ENCODE measurements at regions of chr10 and their contacts with region 1.

Region 1: DNA sequence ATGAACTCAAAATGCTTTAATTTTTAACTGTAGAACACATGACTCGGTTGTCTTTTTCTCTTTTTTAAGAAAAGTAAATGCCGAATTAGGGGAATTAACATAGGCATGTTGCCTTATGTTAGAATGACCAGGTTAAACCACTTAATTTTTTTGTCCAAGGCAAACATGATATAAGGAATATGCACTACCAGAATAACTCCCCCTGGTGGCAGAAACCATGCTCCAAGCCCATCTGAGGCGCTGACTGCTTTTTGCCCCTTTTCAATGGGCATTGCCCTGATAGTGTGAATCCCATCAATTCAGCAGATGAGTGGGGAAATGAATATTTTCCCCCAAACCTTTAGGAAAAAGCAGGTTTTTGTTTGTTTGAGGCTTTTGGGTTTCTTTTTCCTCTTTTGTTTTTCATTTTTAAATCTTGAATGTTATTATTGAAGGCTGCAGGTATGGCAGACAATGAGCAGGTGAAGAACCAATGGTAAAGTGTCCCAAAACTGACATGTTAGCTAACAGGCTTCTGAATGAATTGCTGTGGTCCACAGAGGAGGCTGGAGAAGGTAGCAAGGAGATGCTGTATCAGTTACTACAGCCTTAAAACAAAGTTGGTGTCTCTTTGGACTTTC is 284.3 kb downstream of the SORCS3 start:
- DNase-seq: peak; percentile 25
- ATAC-seq: peak; percentile 79
- H3K4me3 ChIP-seq: no peak overlapping the region
- H3K27ac ChIP-seq: no peak overlapping the region
- H3K4me1 ChIP-seq: no peaks in the 10 kb centered on the region
- H3K27me3 ChIP-seq: no peaks in the 10 kb centered on the region
- CTCF ChIP-seq: peak; percentile 52
- EP300 ChIP-seq: no peak
- POLR2A ChIP-seq: no peak
- RAD21 ChIP-seq: no peak

Region 2: DNA sequence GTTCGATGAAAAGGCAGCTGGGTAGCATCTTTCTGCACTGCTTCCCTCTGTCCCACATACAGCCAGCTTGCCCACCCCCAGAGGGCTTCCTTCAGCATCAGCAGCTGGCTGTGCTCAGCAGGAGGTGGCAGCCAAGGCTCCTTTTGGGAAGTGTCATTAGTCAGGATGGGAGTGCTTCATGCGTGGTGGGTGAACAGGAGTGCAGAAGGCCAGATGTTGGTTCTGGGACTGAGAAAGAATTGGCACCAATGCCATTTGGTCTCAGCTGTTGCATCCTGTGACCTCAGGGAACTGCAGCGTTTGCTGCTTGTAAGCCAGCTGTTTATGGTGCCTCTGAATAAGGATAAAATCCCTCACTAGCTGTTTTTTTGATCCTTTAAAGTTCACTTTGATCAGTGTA is 415.4 kb before region 1 on chr10:
- CTCF ChIA-PET with region 1: no interaction called
- POLR2A ChIA-PET with region 1: no interaction called
- in situ Hi-C with region 1: no loop called
- intact Hi-C with region 1: no loop called
- DNase-seq: no peak
- ATAC-seq: no peak
- H3K4me3 ChIP-seq: no peak overlapping the region
- H3K27ac ChIP-seq: no peak overlapping the region
- H3K4me1 ChIP-seq: no peaks in the 10 kb centered on the region
- H3K27me3 ChIP-seq: peaks cover 0 to 13% of the 10 kb centered on the region in 2 experiments; a peak in 1 of 5 replicates
- CTCF ChIP-seq: no peak
- EP300 ChIP-seq: no peak
- POLR2A ChIP-seq: no peak
- RAD21 ChIP-seq: no peak

Region 3: GRCh38 chr10:104642658-104643302 is 282.6 kb before region 1 on chr10:
- CTCF ChIA-PET with region 1: interaction called, 6 read pairs
- POLR2A ChIA-PET with region 1: no interaction called
- in situ Hi-C with region 1: loop called (anchors 10 kb)
- intact Hi-C with region 1: loop called (anchors 2 kb)
- DNase-seq: peak; percentile 28
- ATAC-seq: peak; percentile 79
- H3K4me3 ChIP-seq: no peak overlapping the region
- H3K27ac ChIP-seq: no peak overlapping the region
- H3K4me1 ChIP-seq: no peaks in the 10 kb centered on the region
- H3K27me3 ChIP-seq: peaks cover 4 to 42% of the 10 kb centered on the region in 2 experiments; a peak in 3 of 5 replicates
- CTCF ChIP-seq: peak; percentile 54
- EP300 ChIP-seq: no peak
- POLR2A ChIP-seq: no peak
- RAD21 ChIP-seq: no peak

Region 4: DNA sequence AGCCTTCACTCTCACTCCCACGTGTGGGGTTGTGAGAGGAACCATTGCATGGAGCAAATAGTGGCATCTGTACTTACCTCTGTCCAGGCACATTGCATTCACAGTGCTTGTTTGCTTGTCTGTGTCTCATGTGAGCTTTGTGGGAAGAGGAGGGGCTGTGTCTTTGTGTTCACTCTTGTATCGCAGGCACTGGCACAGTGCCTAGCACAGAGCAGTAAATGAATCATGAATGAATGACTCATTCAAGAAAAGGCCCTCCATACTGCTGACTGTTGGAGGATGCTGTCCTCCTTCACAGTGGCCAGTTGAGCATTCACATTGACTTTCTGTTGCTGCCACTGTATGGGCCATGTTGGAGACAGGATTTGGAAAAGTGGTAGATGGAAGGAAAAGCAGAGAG is 159.0 kb before region 1 on chr10:
- CTCF ChIA-PET with region 1: no interaction called
- POLR2A ChIA-PET with region 1: no interaction called
- in situ Hi-C with region 1: no loop called
- intact Hi-C with region 1: loop called (anchors 5 kb)
- DNase-seq: no peak
- ATAC-seq: no peak
- H3K4me3 ChIP-seq: no peak overlapping the region
- H3K27ac ChIP-seq: no peak overlapping the region
- H3K4me1 ChIP-seq: no peaks in the 10 kb centered on the region
- H3K27me3 ChIP-seq: no peaks in the 10 kb centered on the region
- CTCF ChIP-seq: no peak
- EP300 ChIP-seq: no peak
- POLR2A ChIP-seq: no peak
- RAD21 ChIP-seq: no peak

Region 5: DNA sequence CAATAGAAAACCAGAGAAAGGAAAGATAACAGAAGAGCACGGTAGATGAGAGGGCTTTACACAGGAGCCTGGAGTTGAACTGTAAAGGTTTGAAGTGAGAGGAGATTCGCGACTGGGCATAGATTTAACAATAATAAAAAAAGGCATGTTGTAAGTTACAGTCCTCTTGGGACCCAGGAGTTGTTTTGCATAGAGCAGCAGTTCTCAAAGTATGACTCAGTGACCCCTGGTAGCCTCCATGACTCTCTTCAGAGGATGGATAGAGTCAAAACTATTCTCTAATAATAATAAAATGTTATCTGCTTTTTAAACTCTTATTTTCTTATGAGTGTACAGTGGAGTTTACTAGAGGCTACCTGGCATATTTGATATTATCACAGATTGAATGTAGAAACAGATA is 21.9 kb before region 1 on chr10:
- CTCF ChIA-PET with region 1: no interaction called
- POLR2A ChIA-PET with region 1: no interaction called
- in situ Hi-C with region 1: no loop called
- intact Hi-C with region 1: no loop called
- DNase-seq: no peak
- ATAC-seq: no peak
- H3K4me3 ChIP-seq: no peak overlapping the region
- H3K27ac ChIP-seq: no peak overlapping the region
- H3K4me1 ChIP-seq: no peaks in the 10 kb centered on the region
- H3K27me3 ChIP-seq: no peaks in the 10 kb centered on the region
- CTCF ChIP-seq: no peak
- EP300 ChIP-seq: no peak
- POLR2A ChIP-seq: no peak
- RAD21 ChIP-seq: no peak

Measured in HepG2 (cell line).